Right lobe of liver (tissue), 6 donors: ENCODE measurements at regions of chr1 and their contacts with region 1.

Region 1: GRCh38 chr1:246002725-246003441 is 504.2 kb downstream of the SMYD3 start:
- DNase-seq: peak; percentile 83 to 88 (median 86)
- ATAC-seq: peak; percentile 93 to 96 (median 95)
- H3K4me3 ChIP-seq: no peak overlapping the region
- H3K27ac ChIP-seq: no peak overlapping the region
- H3K4me1 ChIP-seq: no peaks in the 10 kb centered on the region
- H3K27me3 ChIP-seq: no peaks in the 10 kb centered on the region
- CTCF ChIP-seq: peak; percentile 85 to 94 (median 90)
- POLR2A ChIP-seq: no peak

Region 2: DNA sequence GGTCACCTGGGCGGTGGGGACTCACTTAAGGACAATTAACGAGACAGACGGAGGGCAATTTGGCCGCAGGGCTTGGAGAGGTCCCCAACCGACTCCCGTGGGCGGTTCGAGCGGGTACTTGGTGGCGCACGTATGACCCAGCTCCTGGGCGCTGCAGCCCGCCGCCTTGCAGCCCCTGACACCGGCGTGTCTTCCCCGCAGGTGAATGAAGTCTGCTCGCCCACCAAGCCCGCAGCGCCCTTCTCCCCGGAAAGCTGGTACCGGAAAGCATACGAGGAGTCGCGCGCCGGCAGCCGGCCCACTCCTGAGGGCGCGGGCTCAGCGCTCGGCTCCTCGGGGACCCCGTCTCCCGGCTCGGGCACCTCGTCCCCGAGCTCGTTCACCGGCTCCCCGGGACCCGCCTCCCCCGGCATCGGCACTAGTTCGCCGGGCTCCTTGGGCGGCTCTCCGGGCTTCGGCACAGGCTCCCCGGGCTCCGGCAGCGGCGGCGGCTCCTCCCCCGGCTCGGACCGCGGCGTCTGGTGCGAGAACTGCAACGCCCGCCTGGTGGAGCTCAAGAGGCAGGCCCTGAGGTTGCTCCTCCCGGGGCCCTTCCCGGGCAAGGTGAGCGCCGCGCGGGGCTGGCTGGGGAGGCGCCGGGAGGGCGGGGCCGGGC is 846.7 kb before region 1 on chr1:
- intact Hi-C with region 1: loop called (anchors 10 kb)
- DNase-seq: peak; percentile 86 to 91 (median 90)
- ATAC-seq: peak; percentile 93 to 97 (median 94)
- H3K4me3 ChIP-seq: peak overlapping the region; percentile 48 to 58 (median 55)
- H3K27ac ChIP-seq: no peak overlapping the region
- H3K4me1 ChIP-seq: peaks cover 0 to 34% (median 11%) of the 10 kb centered on the region in 4 donors
- H3K27me3 ChIP-seq: no peaks in the 10 kb centered on the region
- CTCF ChIP-seq: peak; percentile 75 to 84 (median 79)
- POLR2A ChIP-seq: no peak

Region 3: DNA sequence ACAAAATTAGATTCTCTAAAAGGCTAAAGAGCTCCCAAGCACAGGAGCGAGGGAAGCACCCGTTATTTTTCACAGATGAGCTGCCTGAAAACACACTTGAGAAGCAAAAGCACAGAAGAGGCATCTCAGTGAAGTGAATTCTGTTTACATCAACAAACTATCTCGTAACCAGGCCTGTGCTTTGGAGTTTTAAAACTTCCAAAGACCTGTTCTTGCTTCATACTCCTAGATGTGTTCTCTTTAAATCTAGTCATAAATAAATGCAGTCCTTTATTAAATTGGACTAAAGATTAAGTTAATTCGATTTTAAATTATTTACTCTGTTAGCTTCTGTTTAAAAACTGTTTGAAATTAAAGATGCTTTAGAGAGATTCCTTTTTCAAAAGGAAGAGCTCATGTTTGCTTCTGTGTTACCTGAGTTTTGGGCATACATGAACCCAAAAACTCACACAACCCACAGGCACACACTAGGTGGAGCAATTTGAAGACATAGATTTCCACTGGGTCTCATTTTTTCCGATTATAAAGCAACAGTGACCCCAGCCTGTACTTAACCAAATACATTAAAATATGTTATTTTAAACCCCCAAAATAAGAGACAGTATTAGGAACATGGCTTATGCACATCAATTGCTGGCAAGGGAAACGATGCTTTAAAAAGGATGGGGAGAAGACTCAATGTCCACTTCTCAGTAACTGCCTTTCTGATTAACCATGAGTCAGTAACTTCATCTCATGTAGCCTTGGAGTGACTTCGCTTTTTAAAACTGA is 144.0 kb before region 1 on chr1:
- intact Hi-C with region 1: no loop called
- DNase-seq: no peak
- ATAC-seq: no peak
- H3K4me3 ChIP-seq: no peak overlapping the region
- H3K27ac ChIP-seq: no peak overlapping the region
- H3K4me1 ChIP-seq: no peaks in the 10 kb centered on the region
- H3K27me3 ChIP-seq: no peaks in the 10 kb centered on the region
- CTCF ChIP-seq: peak in 1 of 4 donors; percentile 7
- POLR2A ChIP-seq: no peak